Transverse colon (tissue), 4 donors: ENCODE measurements at regions of chr3 and their contacts with region 1.

Region 1: GRCh38 chr3:161809659-161810058 is 313.1 kb downstream of the OTOL1 start:
- DNase-seq: no peak
- H3K4me3 ChIP-seq: no peak overlapping the region
- H3K27ac ChIP-seq: no peak overlapping the region
- H3K4me1 ChIP-seq: no peaks in the 10 kb centered on the region
- H3K27me3 ChIP-seq: no peaks in the 10 kb centered on the region
- CTCF ChIP-seq: no peak
- EP300 ChIP-seq: no peak
- POLR2A ChIP-seq: no peak

Region 2: GRCh38 chr3:162094301-162094700 is 284.6 kb after region 1 on chr3:
- in situ Hi-C with region 1: no loop called
- intact Hi-C with region 1: loop called (anchors 5 kb)
- DNase-seq: no peak
- H3K4me3 ChIP-seq: no peak overlapping the region
- H3K27ac ChIP-seq: no peak overlapping the region
- H3K4me1 ChIP-seq: no peaks in the 10 kb centered on the region
- H3K27me3 ChIP-seq: no peaks in the 10 kb centered on the region
- CTCF ChIP-seq: no peak
- EP300 ChIP-seq: no peak
- POLR2A ChIP-seq: no peak